Lower leg skin (tissue), 4 donors: ENCODE measurements at regions of chr13 and their contacts with region 1.

Region 1: GRCh38 chr13:88464851-88465250 is 793.7 kb downstream of the SLITRK5 start:
- DNase-seq: no peak
- H3K4me3 ChIP-seq: no peak overlapping the region
- CTCF ChIP-seq: no peak
- POLR2A ChIP-seq: no peak

Region 2: DNA sequence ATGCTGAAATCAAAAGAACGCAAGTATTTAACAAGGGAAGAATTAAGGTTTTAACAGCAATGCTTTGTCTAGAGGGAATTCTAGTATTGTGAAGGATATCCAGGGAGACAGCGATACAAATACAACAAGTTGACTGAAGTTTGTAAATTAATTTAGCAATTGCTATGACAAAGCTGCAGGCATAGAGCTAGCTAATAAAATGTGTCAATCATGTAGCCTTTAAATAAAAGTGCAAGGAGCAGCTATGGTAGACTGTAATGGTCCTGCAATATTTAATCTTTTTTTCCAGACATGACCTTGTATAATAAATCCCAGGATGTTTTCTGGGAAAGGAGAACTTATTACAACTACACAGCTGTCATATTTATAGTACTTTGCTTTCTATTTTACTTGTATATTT is 14.3 kb before region 1 on chr13:
- intact Hi-C with region 1: loop called (anchors 1 kb)
- DNase-seq: no peak
- H3K4me3 ChIP-seq: no peak overlapping the region
- CTCF ChIP-seq: no peak
- POLR2A ChIP-seq: no peak